Common myeloid progenitor, CD34-positive (primary cell): ENCODE measurements at regions of chr3 and their contacts with region 1.

Region 1: GRCh38 chr3:69324362-69325025 is 61.4 kb downstream of the FRMD4B start:
- DNase-seq: peak; percentile 76 to 86 (median 84)
- H3K4me3 ChIP-seq: peak overlapping the region in 5 of 7 experiments; percentile 27 to 55 (median 32)
- H3K27ac ChIP-seq: peak overlapping the region in 1 of 2 experiments; percentile 18
- H3K4me1 ChIP-seq: peaks cover 37 to 72% (median 64%) of the 10 kb centered on the region in 4 experiments
- H3K27me3 ChIP-seq: no peaks in the 10 kb centered on the region

Region 2: DNA sequence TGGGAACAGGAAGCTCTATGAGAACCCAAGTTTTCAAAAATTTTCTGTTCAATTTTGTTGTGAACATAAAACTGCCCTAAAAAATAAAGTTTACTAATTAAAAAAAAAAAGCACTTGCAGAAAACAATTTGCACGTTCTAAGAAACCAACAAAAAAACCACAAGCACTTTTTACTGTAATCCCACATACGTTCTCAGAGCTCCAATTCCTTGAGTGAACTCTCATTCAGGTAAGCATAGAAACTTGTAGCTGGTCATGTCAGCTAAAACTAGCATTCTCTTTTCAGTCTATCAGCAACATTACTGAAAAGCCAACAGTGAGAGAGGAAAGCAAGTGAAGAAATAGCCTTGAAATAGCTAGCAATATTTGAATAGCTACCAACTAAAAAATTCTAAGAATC is 260.9 kb before region 1 on chr3:
- CTCF ChIA-PET with region 1: no interaction called
- POLR2A ChIA-PET with region 1: no interaction called
- DNase-seq: no peak
- H3K4me3 ChIP-seq: no peak overlapping the region
- H3K27ac ChIP-seq: no peak overlapping the region
- H3K4me1 ChIP-seq: peaks cover 3 to 7% (median 6%) of the 10 kb centered on the region in 4 experiments
- H3K27me3 ChIP-seq: no peaks in the 10 kb centered on the region

Region 3: DNA sequence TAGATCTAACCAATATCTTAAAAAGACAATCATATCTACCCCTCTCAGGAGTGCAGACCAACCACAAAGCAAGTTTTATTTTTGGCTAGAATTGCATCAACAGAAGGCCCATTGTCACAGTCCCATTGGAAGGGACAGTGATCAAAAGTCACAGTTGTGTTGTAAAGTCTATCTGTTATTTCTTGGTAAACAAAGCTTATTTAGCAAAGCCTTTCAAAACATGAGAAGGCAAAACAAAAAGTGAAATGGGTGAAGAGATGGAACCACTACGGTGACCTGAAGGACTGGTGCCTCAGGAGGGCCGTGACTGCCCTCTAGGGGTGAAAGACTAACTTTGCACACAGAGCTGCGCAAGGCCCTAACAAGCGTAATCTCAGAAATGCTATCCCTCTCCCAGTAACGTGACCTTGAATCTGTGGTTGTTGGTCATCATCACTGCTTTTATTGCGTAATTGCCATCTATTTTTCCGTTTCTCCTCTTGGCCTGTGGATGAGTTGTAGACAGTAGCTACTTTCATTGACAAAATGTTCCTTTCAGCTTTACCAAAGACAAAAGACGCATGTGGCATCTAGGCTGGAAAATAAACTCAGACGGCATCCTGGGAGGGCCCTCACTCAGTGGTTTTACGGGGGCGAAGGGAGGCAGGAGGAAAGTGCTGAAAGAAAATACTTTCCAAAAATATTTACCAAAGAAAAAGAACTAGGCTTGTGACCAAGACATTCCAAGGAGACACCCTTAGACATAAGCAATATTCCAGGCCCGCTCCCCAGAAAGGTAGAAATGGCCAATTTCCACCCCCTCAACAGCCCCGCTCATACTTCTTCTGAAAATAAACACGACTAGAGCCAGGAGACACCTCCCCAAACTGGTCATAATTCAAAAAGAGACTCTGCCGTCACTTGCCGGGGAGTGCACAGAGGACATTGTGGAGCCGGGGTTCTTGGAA is 18.0 kb before region 1 on chr3:
- CTCF ChIA-PET with region 1: interaction called, 48 read pairs
- POLR2A ChIA-PET with region 1: no interaction called
- DNase-seq: peak; percentile 73 to 87 (median 85)
- H3K4me3 ChIP-seq: no peak overlapping the region
- H3K27ac ChIP-seq: no peak overlapping the region
- H3K4me1 ChIP-seq: peaks cover 0 to 3% (median 0%) of the 10 kb centered on the region in 4 experiments
- H3K27me3 ChIP-seq: no peaks in the 10 kb centered on the region

Region 4: GRCh38 chr3:69385723-69386555 is 61.4 kb after region 1 on chr3 and contains the start of gene FRMD4B:
- CTCF ChIA-PET with region 1: interaction called, 125 read pairs
- POLR2A ChIA-PET with region 1: interaction called, 3 read pairs
- DNase-seq: peak; percentile 75 to 88 (median 78)
- H3K4me3 ChIP-seq: peak within 1 kb of the TSS; percentile 55 to 98 (median 86)
- H3K27ac ChIP-seq: peak within 1 kb of the TSS in 1 of 2 experiments; percentile 49
- H3K4me1 ChIP-seq: peaks cover 18 to 43% (median 36%) of the 10 kb centered on the region in 4 experiments
- H3K27me3 ChIP-seq: no peaks in the 10 kb centered on the region

Region 5: GRCh38 chr3:69410250-69410649 is 85.8 kb after region 1 on chr3:
- CTCF ChIA-PET with region 1: interaction called, 143 read pairs
- POLR2A ChIA-PET with region 1: no interaction called
- DNase-seq: peak; percentile 81 to 89 (median 86)
- H3K4me3 ChIP-seq: peak overlapping the region in 1 of 7 experiments; percentile 14
- H3K27ac ChIP-seq: no peak overlapping the region
- H3K4me1 ChIP-seq: peaks cover 0 to 14% (median 7%) of the 10 kb centered on the region in 4 experiments
- H3K27me3 ChIP-seq: no peaks in the 10 kb centered on the region

Region 6: DNA sequence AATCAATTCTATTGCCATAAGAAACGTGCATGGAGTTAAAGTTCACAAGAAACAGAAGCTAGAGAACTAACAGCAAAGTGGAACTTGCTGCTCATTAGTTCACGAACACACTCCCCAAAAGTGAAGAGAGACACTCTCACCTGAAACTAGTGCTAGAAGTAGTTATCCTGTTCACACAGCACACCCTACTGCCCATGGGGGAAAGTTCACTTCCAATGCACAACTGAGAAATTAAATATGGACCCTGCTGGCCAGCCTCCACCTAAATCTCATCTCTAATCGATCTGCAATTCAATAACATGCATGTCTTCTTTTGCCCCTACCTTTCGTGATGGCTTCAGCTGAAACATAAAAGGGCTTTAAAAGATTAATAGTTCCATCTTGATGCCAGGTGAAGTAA is 100.8 kb after region 1 on chr3:
- CTCF ChIA-PET with region 1: interaction called, 107 read pairs
- POLR2A ChIA-PET with region 1: no interaction called
- DNase-seq: peak; percentile 58 to 76 (median 74)
- H3K4me3 ChIP-seq: no peak overlapping the region
- H3K27ac ChIP-seq: no peak overlapping the region
- H3K4me1 ChIP-seq: no peaks in the 10 kb centered on the region
- H3K27me3 ChIP-seq: no peaks in the 10 kb centered on the region

Region 7: GRCh38 chr3:69439643-69440270 is 115.3 kb after region 1 on chr3:
- CTCF ChIA-PET with region 1: interaction called, 11 read pairs
- POLR2A ChIA-PET with region 1: no interaction called
- DNase-seq: peak; percentile 47 to 75 (median 71)
- H3K4me3 ChIP-seq: peak overlapping the region in 3 of 7 experiments; percentile 41 to 59 (median 52)
- H3K27ac ChIP-seq: no peak overlapping the region
- H3K4me1 ChIP-seq: peaks cover 0 to 10% (median 6%) of the 10 kb centered on the region in 4 experiments
- H3K27me3 ChIP-seq: no peaks in the 10 kb centered on the region

Region 8: DNA sequence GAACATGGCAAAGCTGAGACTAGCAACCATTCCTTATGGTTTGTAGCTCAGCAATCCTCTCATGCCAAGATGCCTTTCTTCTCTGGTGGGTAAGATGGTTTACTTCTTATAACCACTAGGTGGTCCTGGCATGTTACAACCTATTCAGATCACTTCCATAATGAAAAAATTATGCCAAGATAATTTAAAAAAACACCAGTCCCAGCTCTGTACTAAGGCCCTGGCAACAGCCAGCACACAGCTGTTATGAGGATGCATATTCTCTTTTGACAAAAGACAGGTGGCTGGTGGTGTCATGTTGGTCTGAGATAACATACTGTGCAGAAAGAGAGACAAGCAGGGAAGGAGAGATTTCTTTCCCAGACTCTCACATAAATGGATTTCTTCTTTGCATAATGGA is 127.1 kb after region 1 on chr3:
- CTCF ChIA-PET with region 1: interaction called, 13 read pairs
- POLR2A ChIA-PET with region 1: no interaction called
- DNase-seq: peak; percentile 24 to 57 (median 44)
- H3K4me3 ChIP-seq: no peak overlapping the region
- H3K27ac ChIP-seq: no peak overlapping the region
- H3K4me1 ChIP-seq: no peaks in the 10 kb centered on the region
- H3K27me3 ChIP-seq: no peaks in the 10 kb centered on the region

Region 9: GRCh38 chr3:69510481-69511030 is 186.1 kb after region 1 on chr3:
- CTCF ChIA-PET with region 1: no interaction called
- POLR2A ChIA-PET with region 1: no interaction called
- DNase-seq: no peak
- H3K4me3 ChIP-seq: no peak overlapping the region
- H3K27ac ChIP-seq: no peak overlapping the region
- H3K4me1 ChIP-seq: no peaks in the 10 kb centered on the region
- H3K27me3 ChIP-seq: no peaks in the 10 kb centered on the region